ENCODE measurements at regions of chr12 and their contacts with region 1.

Region 1: DNA sequence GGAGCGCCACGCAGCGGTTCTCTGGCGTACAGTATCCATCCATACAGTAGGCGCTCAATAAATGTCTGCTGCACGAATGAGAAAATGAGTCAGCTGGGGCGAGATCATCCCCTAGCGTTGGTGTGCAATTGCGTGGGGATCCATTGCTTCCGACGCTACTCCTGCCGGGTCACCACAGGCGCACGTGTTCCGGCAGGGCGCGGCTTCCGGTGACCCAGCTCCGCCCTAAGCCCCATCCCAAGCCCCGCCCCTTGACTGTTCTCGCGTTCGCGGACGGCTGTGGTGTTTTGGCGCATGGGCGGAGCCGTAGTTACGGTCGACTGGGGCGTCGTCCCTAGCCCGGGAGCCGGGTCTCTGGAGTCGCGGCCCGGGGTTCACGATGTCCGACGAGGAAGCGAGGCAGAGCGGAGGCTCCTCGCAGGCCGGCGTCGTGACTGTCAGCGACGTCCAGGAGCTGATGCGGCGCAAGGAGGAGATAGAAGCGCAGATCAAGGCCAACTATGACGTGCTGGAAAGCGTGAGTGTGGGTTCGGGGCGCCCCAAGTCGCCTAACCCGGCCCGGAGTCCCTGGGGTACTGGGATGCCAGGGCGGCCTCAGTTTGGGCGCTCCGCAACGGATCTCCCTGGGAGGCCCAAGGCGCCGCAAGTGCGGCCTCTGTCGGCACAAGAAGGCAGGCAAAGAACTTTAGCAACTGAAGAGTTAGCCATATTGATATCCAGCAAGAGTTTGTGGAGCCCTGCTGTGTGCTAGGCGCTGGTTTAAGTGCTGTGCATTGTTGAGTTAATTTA is at the start of gene PSMD9:
- DNase-seq: peak; percentile 97
- ATAC-seq: peak; percentile 95
- H3K4me3 Mint-ChIP-seq: peak within 1 kb of the TSS; percentile 98
- H3K27ac Mint-ChIP-seq: peak within 1 kb of the TSS; percentile 98
- H3K4me1 Mint-ChIP-seq: peaks cover 29% of the 10 kb centered on the region
- H3K27me3 Mint-ChIP-seq: peaks cover 2% of the 10 kb centered on the region
- CTCF ChIP-seq: no peak
- total RNA-seq, gene PSMD9: 35.9 and 40.2 TPM in 2 replicates

Region 2: DNA sequence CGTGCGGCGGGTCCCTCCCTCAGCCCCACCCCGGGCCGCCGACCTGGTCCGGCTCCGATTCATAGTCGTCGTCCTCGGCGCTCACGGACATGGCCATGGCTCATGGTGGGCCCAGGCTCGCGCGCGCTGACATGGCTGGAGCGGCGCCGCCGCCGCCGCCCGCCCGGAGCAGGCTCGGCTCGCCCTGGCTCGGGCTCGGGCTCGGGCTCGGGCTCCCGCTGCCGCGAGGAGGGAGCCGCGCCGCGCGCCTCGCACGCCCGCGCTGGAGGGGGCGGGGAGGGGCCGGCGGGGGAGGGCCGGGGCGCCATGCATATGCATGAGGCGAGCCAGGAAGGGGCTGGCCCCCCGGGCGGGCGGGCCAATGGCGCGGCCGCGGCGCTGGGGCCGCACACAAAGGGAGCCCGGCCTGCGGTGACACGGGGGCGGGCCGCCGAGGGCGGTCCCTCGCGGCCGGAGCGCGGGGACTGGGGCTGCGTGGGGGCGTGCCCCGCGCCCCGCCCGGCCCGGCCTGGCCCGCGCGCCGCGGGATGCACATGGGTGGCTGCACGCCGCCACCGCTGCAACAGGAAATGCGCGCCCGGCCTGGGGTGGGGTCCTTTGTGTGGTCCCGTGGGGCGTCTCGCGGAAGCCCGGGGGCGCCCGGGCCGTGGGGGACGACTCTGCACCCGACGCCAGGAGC is 421.4 kb before region 1 on chr12:
- CTCF ChIA-PET with region 1: no interaction called
- POLR2A ChIA-PET with region 1: no interaction called
- intact Hi-C with region 1: loop called (anchors 5 kb)
- DNase-seq: peak; percentile 87
- ATAC-seq: peak; percentile 86
- H3K4me3 Mint-ChIP-seq: peak overlapping the region; percentile 41
- H3K27ac Mint-ChIP-seq: no peak overlapping the region
- H3K4me1 Mint-ChIP-seq: peaks cover 58% of the 10 kb centered on the region
- H3K27me3 Mint-ChIP-seq: no peaks in the 10 kb centered on the region
- CTCF ChIP-seq: no peak

Region 3: GRCh38 chr12:121712461-121713256 is 176.0 kb before region 1 on chr12 and contains the start of gene TMEM120B:
- CTCF ChIA-PET with region 1: no interaction called
- POLR2A ChIA-PET with region 1: interaction called, 4 read pairs
- intact Hi-C with region 1: loop called (anchors 1 kb)
- DNase-seq: peak; percentile 86
- ATAC-seq: peak; percentile 94
- H3K4me3 Mint-ChIP-seq: peak within 1 kb of the TSS; percentile 97
- H3K27ac Mint-ChIP-seq: peak within 1 kb of the TSS; percentile 90
- H3K4me1 Mint-ChIP-seq: peaks cover 32% of the 10 kb centered on the region
- H3K27me3 Mint-ChIP-seq: no peaks in the 10 kb centered on the region
- CTCF ChIP-seq: no peak
- total RNA-seq, gene TMEM120B: 7.3 and 8.3 TPM in 2 replicates

Region 4: DNA sequence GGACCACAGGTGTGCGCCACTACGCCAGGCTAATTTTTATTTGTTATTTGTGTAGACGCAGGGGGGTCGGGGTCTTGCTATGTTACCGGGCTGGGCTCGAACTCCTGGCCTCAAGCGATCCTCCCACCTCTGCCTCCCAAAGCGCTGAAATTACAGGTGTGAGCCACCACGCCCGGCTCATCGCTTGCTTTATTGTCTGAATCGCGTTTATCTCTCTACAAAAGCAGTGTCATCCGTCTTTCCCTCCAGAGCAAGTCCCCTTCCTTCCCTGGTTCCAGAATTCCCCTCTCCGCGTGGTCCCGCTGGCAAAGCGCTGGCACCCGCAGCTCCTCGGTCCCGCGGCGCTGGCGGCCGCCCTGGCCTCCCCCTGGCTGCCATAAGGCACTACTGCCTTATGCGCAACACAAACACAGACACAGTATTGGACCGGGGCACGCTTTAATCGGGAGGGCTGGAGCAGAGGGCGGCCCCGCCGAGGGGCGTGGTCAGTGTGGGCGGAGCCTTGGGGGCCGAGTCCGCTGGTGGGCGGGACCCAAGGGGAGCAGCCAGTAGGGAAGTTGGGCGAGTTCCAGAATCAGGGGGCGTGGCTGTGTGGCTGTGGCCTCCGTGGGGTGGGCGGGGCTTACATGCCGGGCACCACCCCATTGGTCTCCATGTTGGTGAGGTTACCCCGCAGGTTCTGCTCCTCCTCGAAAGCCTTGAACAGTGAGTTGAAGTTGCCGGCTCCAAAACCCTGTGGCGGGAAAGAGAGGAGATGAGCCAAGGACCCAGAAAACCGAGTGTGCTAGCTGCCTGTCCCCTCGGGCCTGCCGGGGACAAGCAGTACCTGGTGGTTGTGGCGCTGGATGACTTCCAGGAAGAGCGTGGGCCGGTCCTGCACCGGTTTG is 49.3 kb before region 1 on chr12:
- CTCF ChIA-PET with region 1: no interaction called
- POLR2A ChIA-PET with region 1: interaction called, 9 read pairs
- intact Hi-C with region 1: loop called (anchors 1 kb)
- DNase-seq: peak; percentile 99
- ATAC-seq: peak; percentile 99
- H3K4me3 Mint-ChIP-seq: peak overlapping the region; percentile 97
- H3K27ac Mint-ChIP-seq: peak overlapping the region; percentile 88
- H3K4me1 Mint-ChIP-seq: peaks cover 15% of the 10 kb centered on the region
- H3K27me3 Mint-ChIP-seq: no peaks in the 10 kb centered on the region
- CTCF ChIP-seq: no peak

Region 5: GRCh38 chr12:121955258-121956235 is 66.9 kb after region 1 on chr12:
- CTCF ChIA-PET with region 1: no interaction called
- POLR2A ChIA-PET with region 1: no interaction called
- intact Hi-C with region 1: no loop called
- DNase-seq: no peak
- ATAC-seq: peak; percentile 21
- H3K4me3 Mint-ChIP-seq: no peak overlapping the region
- H3K27ac Mint-ChIP-seq: no peak overlapping the region
- H3K4me1 Mint-ChIP-seq: peaks cover 21% of the 10 kb centered on the region
- H3K27me3 Mint-ChIP-seq: no peaks in the 10 kb centered on the region
- CTCF ChIP-seq: no peak

Region 6: DNA sequence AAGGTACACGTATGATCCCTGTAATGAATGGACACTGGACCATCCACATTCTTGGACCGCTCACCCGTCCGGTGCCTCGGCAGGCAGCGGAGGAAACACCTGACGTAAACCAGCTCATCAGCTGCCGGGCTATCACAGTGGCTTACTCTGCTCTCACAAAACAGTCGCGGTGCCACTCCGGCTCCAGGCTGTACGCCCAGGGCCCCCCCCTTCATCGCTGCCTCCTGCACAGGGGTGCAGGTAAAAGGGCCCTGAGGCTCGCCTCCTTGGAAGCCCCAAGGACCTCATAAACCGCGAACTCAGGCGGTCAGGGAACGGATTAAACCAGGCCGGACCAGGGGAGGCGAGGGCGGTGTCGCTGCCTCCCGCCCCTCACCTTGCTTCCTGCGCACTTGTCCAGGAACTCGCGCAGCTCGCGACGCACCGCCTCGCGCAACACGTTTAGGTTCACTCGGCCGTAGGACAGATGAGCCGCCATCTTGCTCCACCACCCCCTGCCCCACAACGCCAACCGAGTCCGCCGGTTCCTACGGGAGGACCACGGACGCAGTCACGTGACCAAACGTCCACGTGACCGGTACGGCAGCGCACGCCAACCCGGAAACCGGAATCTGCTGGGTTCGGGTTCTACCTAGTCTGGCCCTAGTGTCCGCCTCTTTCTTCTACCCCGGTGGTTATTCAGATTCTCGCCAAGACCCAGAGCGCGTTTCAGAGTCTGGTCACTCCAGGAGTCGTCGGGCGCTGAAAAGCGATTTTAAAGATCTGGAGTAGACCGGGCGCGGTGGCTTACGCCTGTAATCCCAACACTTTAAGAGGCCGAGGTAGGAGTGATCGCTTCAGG is 377.5 kb after region 1 on chr12 and contains the start of gene VPS33A:
- CTCF ChIA-PET with region 1: no interaction called
- POLR2A ChIA-PET with region 1: no interaction called
- intact Hi-C with region 1: loop called (anchors 2 kb)
- DNase-seq: peak; percentile 88
- ATAC-seq: peak; percentile 84
- H3K4me3 Mint-ChIP-seq: peak within 1 kb of the TSS; percentile 97
- H3K27ac Mint-ChIP-seq: peak within 1 kb of the TSS; percentile 98
- H3K4me1 Mint-ChIP-seq: peaks cover 21% of the 10 kb centered on the region
- H3K27me3 Mint-ChIP-seq: peaks cover 2% of the 10 kb centered on the region
- CTCF ChIP-seq: no peak
- total RNA-seq, gene VPS33A: 29.6 and 33.2 TPM in 2 replicates

Region 7: GRCh38 chr12:122318607-122319605 is 430.2 kb after region 1 on chr12:
- CTCF ChIA-PET with region 1: no interaction called
- POLR2A ChIA-PET with region 1: no interaction called
- intact Hi-C with region 1: no loop called
- DNase-seq: no peak
- ATAC-seq: no peak
- H3K4me3 Mint-ChIP-seq: no peak overlapping the region
- H3K27ac Mint-ChIP-seq: no peak overlapping the region
- H3K4me1 Mint-ChIP-seq: no peaks in the 10 kb centered on the region
- H3K27me3 Mint-ChIP-seq: no peaks in the 10 kb centered on the region
- CTCF ChIP-seq: no peak